Endothelial cell of umbilical vein (primary cell): ENCODE measurements at regions of chr7 and their contacts with region 1.

Region 1: GRCh38 chr7:96075510-96076349 is 246.2 kb downstream of the SLC25A13 start:
- DNase-seq: peak; percentile 56
- H3K4me3 ChIP-seq: peak overlapping the region; percentile 46 to 80 (median 80)
- H3K27ac ChIP-seq: no peak overlapping the region
- H3K4me1 ChIP-seq: peaks cover 8% of the 10 kb centered on the region
- H3K27me3 ChIP-seq: peaks cover 0 to 3% of the 10 kb centered on the region in 2 experiments
- CTCF ChIP-seq: peak; percentile 88 to 90
- POLR2A ChIP-seq: no peak

Region 2: DNA sequence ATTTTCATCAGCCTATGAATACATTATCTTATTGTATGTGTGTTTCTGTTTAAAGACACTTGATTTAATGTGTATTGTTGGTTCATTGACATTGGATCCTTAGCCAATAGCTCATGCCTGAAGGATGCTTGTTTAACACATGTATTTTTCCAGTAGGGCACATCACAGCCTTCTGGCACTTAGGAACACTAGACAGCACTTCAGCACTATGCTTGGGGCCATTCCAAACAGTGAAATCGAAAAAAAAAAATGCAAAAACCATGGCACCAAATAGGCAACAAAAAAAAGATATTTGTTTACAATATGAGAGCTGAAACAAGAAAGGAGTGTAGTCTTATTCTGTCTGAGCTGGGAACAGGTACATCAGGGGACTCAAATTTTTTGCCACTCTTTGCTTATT is 16.7 kb before region 1 on chr7:
- CTCF ChIA-PET with region 1: no interaction called
- POLR2A ChIA-PET with region 1: no interaction called
- dilution Hi-C with region 1: no loop called
- intact Hi-C with region 1: no loop called
- DNase-seq: no peak
- H3K4me3 ChIP-seq: no peak overlapping the region
- H3K27ac ChIP-seq: no peak overlapping the region
- H3K4me1 ChIP-seq: no peaks in the 10 kb centered on the region
- H3K27me3 ChIP-seq: peaks cover 0 to 2% of the 10 kb centered on the region in 2 experiments
- CTCF ChIP-seq: no peak
- POLR2A ChIP-seq: no peak

Region 3: GRCh38 chr7:96118449-96119001 is 42.8 kb after region 1 on chr7:
- CTCF ChIA-PET with region 1: no interaction called
- POLR2A ChIA-PET with region 1: no interaction called
- dilution Hi-C with region 1: no loop called
- intact Hi-C with region 1: no loop called
- DNase-seq: no peak
- H3K4me3 ChIP-seq: no peak overlapping the region
- H3K27ac ChIP-seq: no peak overlapping the region
- H3K4me1 ChIP-seq: peaks cover 3% of the 10 kb centered on the region
- H3K27me3 ChIP-seq: no peaks in the 10 kb centered on the region
- CTCF ChIP-seq: no peak
- POLR2A ChIP-seq: no peak

Region 4: DNA sequence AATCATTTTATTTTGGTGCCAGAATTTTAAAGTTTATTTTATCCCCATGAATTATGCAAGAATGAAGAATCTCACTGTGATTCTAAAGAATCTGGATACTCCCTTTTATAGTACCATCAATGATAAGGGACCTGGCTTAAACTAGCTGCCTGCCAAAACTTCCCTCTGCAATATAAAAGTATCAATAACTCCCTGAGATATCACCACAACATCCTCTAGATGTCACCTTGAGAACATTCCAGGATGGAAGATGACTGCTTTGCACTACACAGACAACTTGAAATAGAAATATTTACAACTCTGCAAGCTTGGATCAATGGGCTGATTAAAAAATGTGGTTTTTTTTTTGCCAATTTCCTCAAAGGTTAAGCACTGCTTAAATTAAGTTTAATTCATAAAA is 104.1 kb after region 1 on chr7:
- CTCF ChIA-PET with region 1: interaction called, 3 read pairs
- POLR2A ChIA-PET with region 1: no interaction called
- dilution Hi-C with region 1: no loop called
- intact Hi-C with region 1: loop called (anchors 5 kb)
- DNase-seq: no peak
- H3K4me3 ChIP-seq: no peak overlapping the region
- H3K27ac ChIP-seq: no peak overlapping the region
- H3K4me1 ChIP-seq: no peaks in the 10 kb centered on the region
- H3K27me3 ChIP-seq: no peaks in the 10 kb centered on the region
- CTCF ChIP-seq: no peak
- POLR2A ChIP-seq: no peak

Region 5: GRCh38 chr7:96388620-96389383 is 313.1 kb after region 1 on chr7:
- CTCF ChIA-PET with region 1: no interaction called
- POLR2A ChIA-PET with region 1: no interaction called
- dilution Hi-C with region 1: no loop called
- intact Hi-C with region 1: loop called (anchors 1 kb)
- DNase-seq: peak; percentile 89
- H3K4me3 ChIP-seq: peak overlapping the region in 1 of 3 experiments; percentile 38
- H3K27ac ChIP-seq: peak overlapping the region; percentile 97
- H3K4me1 ChIP-seq: peaks cover 26% of the 10 kb centered on the region
- H3K27me3 ChIP-seq: no peaks in the 10 kb centered on the region
- CTCF ChIP-seq: no peak
- POLR2A ChIP-seq: peak; percentile 18

Region 6: DNA sequence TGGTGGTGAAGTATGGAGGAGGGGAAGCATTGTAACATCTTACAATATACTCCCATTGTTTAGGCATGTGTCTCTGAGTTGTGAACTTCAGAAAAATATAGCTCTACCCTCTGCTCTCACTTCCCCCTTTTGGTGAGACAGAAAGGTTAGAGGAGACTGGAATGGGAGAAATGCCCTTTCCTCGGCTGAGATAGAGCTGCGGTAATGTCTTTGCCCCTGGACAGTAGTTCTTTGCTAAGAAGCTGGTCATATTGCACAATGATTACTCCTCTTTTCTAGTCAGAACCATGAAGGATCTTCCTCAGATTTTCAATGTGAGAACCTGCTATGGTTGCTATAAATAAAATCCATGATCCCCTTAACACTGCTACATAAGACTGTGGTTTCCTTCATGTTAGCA is 462.9 kb after region 1 on chr7:
- CTCF ChIA-PET with region 1: no interaction called
- POLR2A ChIA-PET with region 1: no interaction called
- dilution Hi-C with region 1: no loop called
- intact Hi-C with region 1: loop called (anchors 10 kb)
- DNase-seq: no peak
- H3K4me3 ChIP-seq: no peak overlapping the region
- H3K27ac ChIP-seq: no peak overlapping the region
- H3K4me1 ChIP-seq: no peaks in the 10 kb centered on the region
- H3K27me3 ChIP-seq: no peaks in the 10 kb centered on the region
- CTCF ChIP-seq: no peak
- POLR2A ChIP-seq: no peak

Region 7: GRCh38 chr7:96823274-96823673 is 747.5 kb after region 1 on chr7:
- CTCF ChIA-PET with region 1: no interaction called
- POLR2A ChIA-PET with region 1: no interaction called
- dilution Hi-C with region 1: no loop called
- intact Hi-C with region 1: loop called (anchors 10 kb)
- DNase-seq: no peak
- H3K4me3 ChIP-seq: no peak overlapping the region
- H3K27ac ChIP-seq: no peak overlapping the region
- H3K4me1 ChIP-seq: no peaks in the 10 kb centered on the region
- H3K27me3 ChIP-seq: no peaks in the 10 kb centered on the region
- CTCF ChIP-seq: no peak
- POLR2A ChIP-seq: no peak